PC-9 (cell line): ENCODE measurements at regions of chr9 and their contacts with region 1.

Region 1: GRCh38 chr9:120714088-120714845 is at the start of gene MEGF9:
- DNase-seq: peak; percentile 91 to 99
- H3K4me3 ChIP-seq: peak within 1 kb of the TSS; percentile 75
- H3K27ac ChIP-seq: peak within 1 kb of the TSS; percentile 69
- H3K4me1 ChIP-seq: peaks cover 70% of the 10 kb centered on the region
- H3K27me3 ChIP-seq: no peaks in the 10 kb centered on the region
- CTCF ChIP-seq: no peak
- total RNA-seq, gene MEGF9: 30.3 and 35.7 TPM in 2 replicates

Region 2: GRCh38 chr9:120619751-120620655 is 94.3 kb before region 1 on chr9:
- CTCF ChIA-PET with region 1: interaction called, 9 read pairs
- POLR2A ChIA-PET with region 1: interaction called, 8 read pairs
- intact Hi-C with region 1: loop called (anchors 2 kb)
- DNase-seq: peak; percentile 49
- H3K4me3 ChIP-seq: no peak overlapping the region
- H3K27ac ChIP-seq: peak overlapping the region; percentile 41
- H3K4me1 ChIP-seq: peaks cover 20% of the 10 kb centered on the region
- H3K27me3 ChIP-seq: no peaks in the 10 kb centered on the region
- CTCF ChIP-seq: peak; percentile 89

Region 3: DNA sequence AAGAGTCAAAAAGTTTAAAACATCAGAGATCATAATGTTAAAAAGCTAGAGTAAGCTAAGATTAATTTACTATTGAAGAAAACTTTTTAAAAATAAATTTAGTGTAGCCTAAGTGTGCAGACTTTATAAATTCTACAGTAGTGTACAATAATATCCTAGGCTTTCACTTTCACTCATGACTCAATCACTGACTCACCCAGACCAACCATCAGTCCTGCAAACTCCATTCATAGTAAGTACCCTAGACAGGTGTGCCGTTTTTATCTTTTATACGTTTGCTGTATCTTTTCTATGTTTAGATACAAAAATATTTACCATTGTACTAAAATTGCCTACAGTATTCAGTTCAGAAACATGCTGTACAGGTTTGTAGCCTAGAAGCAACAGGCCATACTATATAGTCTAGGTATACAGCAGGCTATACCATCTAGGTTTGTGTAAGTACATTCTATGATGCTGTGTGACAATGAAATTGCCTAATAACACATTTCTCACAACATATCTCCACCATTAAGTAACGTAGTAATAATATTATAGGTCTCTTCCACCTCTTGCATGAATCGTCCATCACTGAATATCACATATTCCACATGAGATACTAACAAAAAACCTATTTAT is 59.2 kb before region 1 on chr9:
- CTCF ChIA-PET with region 1: no interaction called
- POLR2A ChIA-PET with region 1: no interaction called
- intact Hi-C with region 1: loop called (anchors 1 kb)
- DNase-seq: peak; percentile 6 to 55
- H3K4me3 ChIP-seq: no peak overlapping the region
- H3K27ac ChIP-seq: 0 out of 2 replicates have a peak overlapping the region, but pooled peaks have one; percentile 0
- H3K4me1 ChIP-seq: peaks cover 17% of the 10 kb centered on the region
- H3K27me3 ChIP-seq: no peaks in the 10 kb centered on the region
- CTCF ChIP-seq: no peak

Region 4: DNA sequence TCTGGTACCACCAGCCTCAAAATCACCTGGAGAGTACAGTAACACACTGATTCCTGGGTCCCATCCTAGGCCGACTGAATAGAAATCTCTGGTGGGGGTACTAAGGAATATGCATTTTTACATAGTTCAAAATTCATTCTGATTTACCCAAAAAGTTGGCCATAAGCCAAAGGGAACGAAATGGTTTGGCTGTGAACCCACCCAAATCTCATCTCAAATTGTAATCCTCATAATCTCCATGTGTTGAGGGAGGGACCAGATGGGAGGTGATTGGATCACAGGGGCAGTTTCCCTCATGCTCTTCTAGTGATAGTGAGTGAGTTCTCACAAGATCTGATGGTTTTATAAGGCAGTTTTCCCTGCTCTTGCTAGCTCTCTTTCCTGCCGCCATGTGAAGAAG is 31.1 kb before region 1 on chr9:
- CTCF ChIA-PET with region 1: no interaction called
- POLR2A ChIA-PET with region 1: interaction called, 19 read pairs
- intact Hi-C with region 1: loop called (anchors 1 kb)
- DNase-seq: no peak
- H3K4me3 ChIP-seq: no peak overlapping the region
- H3K27ac ChIP-seq: peak overlapping the region; percentile 98
- H3K4me1 ChIP-seq: peaks cover 43% of the 10 kb centered on the region
- H3K27me3 ChIP-seq: no peaks in the 10 kb centered on the region
- CTCF ChIP-seq: no peak

Region 5: DNA sequence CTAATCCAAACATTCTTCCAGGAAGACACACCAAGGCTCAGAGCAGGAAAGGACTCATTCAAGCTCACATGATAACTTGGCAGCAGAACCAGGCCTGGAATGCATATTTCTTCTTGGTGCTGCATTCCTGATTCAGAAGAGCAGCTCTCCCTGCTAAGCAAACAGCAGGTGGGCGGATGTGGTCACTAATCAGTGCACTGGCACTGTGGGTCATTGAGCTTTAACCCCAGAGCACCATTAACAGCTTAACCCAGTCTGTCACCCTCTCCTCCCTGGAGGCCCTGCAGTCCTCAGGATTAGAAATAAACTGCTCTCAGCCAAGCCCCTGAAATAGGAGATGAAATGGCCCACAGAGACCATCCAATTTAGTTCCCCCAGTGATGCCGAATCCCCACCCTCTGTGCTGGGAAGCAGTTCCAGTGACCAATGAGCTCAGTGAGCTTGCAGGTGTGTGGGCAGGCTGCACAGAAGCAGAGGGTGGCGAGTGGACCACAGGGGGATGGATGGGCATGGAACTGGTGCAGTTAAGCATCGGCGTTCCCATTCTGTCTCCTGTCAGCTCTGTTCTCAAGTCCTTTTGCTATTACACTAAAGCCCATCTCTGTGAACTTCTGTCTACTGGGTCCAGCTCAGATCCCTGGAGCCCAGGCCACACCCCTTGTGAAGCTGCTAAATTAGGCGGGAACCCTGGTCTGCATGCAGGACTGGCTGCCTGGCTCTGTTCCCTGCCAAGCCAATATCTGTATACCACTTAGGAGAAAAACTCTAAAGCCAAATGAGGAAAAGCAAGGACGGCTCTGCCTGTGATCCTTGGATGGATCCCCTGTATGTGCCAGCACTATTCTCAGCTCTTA is 16.6 kb after region 1 on chr9:
- CTCF ChIA-PET with region 1: interaction called, 5 read pairs
- POLR2A ChIA-PET with region 1: interaction called, 39 read pairs
- intact Hi-C with region 1: loop called (anchors 1 kb)
- DNase-seq: peak; percentile 92 to 100
- H3K4me3 ChIP-seq: no peak overlapping the region; the same call in 1 of the 2 replicates
- H3K27ac ChIP-seq: peak overlapping the region; percentile 87
- H3K4me1 ChIP-seq: peaks cover 73% of the 10 kb centered on the region
- H3K27me3 ChIP-seq: no peaks in the 10 kb centered on the region
- CTCF ChIP-seq: no peak

Region 6: GRCh38 chr9:121038804-121039203 is 324.5 kb after region 1 on chr9:
- CTCF ChIA-PET with region 1: no interaction called
- POLR2A ChIA-PET with region 1: interaction called, 11 read pairs
- intact Hi-C with region 1: no loop called
- DNase-seq: no peak
- H3K4me3 ChIP-seq: no peak overlapping the region
- H3K27ac ChIP-seq: no peak overlapping the region
- H3K4me1 ChIP-seq: no peaks in the 10 kb centered on the region
- H3K27me3 ChIP-seq: no peaks in the 10 kb centered on the region
- CTCF ChIP-seq: no peak

Region 7: DNA sequence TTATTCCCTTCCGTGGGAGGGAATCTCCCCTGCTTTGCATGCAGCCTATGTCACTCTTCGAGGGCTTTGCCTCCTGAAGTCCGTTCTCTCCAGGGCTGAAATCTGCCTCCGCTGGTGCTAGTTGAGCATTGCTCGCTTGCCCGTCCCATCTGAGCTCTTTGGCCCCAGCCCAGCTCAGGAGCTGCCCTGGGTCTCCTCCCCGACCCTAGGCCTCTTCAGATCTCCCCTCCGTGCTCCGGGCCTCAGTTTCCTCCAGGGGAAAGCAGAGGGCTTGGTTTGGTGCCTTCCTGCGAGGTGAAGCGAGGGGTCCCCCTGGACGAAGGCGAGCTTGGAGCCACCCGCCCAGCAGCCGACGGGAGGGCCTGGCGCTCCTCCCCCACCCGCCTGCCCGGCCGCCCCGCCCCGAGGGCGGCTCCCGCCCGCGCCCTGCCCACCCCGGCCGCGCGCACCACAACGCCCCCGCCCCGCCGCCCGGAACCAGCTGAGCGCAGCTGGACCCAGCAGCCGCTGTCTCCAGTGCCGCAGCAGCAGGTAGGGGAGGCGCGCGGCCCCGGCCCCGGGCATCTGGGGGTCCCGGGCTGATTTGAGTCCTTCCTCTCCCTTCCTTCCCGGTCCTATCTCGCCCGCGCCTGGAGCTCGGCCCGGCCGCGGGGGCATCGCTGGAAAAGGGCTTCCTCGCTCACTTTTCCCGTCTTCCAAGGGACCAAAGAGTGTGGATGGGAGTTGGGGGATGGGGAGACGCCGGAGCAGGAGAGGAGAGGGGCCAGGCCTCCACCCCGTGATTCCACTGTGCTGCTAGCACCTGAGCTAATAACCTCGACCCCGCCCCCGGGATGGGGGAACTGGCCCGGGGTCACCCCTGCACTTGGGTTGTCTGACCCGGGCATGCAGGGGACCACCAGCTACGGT is 553.7 kb after region 1 on chr9 and contains the start of gene GSN:
- CTCF ChIA-PET with region 1: interaction called, 10 read pairs
- POLR2A ChIA-PET with region 1: no interaction called
- intact Hi-C with region 1: no loop called
- DNase-seq: peak; percentile 34 to 74
- H3K4me3 ChIP-seq: peak within 1 kb of the TSS; percentile 93
- H3K27ac ChIP-seq: no peak within 1 kb of the TSS
- H3K4me1 ChIP-seq: peaks cover 23% of the 10 kb centered on the region
- H3K27me3 ChIP-seq: no peaks in the 10 kb centered on the region
- CTCF ChIP-seq: no peak
- total RNA-seq, gene GSN: 135 and 207 TPM in 2 replicates